ENCODE measurements at regions of chr9 and their contacts with region 1.

Region 1: DNA sequence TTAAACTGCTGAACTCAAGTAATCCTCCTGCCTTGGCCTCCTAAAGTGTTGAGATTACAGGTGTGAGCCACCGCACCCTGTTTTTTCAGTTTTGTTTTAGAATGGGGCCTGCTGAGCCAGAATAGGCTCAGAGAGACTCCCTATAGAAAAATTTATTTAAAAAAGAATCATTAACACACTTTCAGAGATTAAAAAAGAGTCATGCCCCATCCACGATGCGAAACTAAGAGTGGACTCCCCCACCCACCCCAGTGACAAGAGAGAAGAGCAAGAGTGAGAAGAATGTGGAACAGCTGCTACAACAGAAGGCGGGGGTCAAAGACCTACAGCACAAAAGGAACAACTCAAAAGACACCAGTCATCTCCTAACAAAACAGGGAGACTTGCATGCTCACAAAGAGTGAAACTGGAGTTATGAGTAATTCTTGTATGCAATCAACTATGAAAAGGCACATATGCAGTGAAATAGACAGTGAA is 47.2 kb downstream of the GLDC start:
- DNase-seq: peak; percentile 92
- ATAC-seq: peak; percentile 99
- H3K4me3 ChIP-seq: no peak overlapping the region
- H3K27ac ChIP-seq: peak overlapping the region; percentile 63
- H3K4me1 ChIP-seq: peaks cover 10% of the 10 kb centered on the region; the same call in 1 of the 2 replicates
- H3K27me3 ChIP-seq: no peaks in the 10 kb centered on the region
- CTCF ChIP-seq: no peak
- EP300 ChIP-seq: peak; percentile 69 to 92; a peak in 3 of 4 replicates
- POLR2A ChIP-seq: no peak
- RAD21 ChIP-seq: peak; percentile 14; the same call in 1 of the 2 replicates

Region 2: GRCh38 chr9:6552033-6552432 is 46.3 kb before region 1 on chr9:
- CTCF ChIA-PET with region 1: no interaction called
- POLR2A ChIA-PET with region 1: no interaction called
- RAD21 ChIA-PET with region 1: no interaction called
- SMC1A ChIA-PET with region 1: no interaction called
- in situ Hi-C with region 1: no loop called
- intact Hi-C with region 1: no loop called
- DNase-seq: no peak
- ATAC-seq: no peak
- H3K4me3 ChIP-seq: no peak overlapping the region
- H3K27ac ChIP-seq: no peak overlapping the region
- H3K4me1 ChIP-seq: no peaks in the 10 kb centered on the region
- H3K27me3 ChIP-seq: no peaks in the 10 kb centered on the region
- CTCF ChIP-seq: no peak
- EP300 ChIP-seq: no peak
- POLR2A ChIP-seq: no peak
- RAD21 ChIP-seq: no peak

Region 3: GRCh38 chr9:6584881-6585597 is 13.2 kb before region 1 on chr9:
- CTCF ChIA-PET with region 1: interaction called, 36 read pairs
- POLR2A ChIA-PET with region 1: no interaction called
- RAD21 ChIA-PET with region 1: interaction called, 11 read pairs
- SMC1A ChIA-PET with region 1: interaction called, 8 read pairs
- in situ Hi-C with region 1: no loop called
- intact Hi-C with region 1: no loop called
- DNase-seq: no peak
- ATAC-seq: peak; percentile 85
- H3K4me3 ChIP-seq: no peak overlapping the region
- H3K27ac ChIP-seq: no peak overlapping the region
- H3K4me1 ChIP-seq: no peaks in the 10 kb centered on the region
- H3K27me3 ChIP-seq: no peaks in the 10 kb centered on the region
- CTCF ChIP-seq: peak in 2 of 3 experiments; percentile 13 to 35; a peak in 3 of 6 replicates
- EP300 ChIP-seq: no peak
- POLR2A ChIP-seq: no peak
- RAD21 ChIP-seq: peak; percentile 42; the same call in 1 of the 2 replicates

Region 4: DNA sequence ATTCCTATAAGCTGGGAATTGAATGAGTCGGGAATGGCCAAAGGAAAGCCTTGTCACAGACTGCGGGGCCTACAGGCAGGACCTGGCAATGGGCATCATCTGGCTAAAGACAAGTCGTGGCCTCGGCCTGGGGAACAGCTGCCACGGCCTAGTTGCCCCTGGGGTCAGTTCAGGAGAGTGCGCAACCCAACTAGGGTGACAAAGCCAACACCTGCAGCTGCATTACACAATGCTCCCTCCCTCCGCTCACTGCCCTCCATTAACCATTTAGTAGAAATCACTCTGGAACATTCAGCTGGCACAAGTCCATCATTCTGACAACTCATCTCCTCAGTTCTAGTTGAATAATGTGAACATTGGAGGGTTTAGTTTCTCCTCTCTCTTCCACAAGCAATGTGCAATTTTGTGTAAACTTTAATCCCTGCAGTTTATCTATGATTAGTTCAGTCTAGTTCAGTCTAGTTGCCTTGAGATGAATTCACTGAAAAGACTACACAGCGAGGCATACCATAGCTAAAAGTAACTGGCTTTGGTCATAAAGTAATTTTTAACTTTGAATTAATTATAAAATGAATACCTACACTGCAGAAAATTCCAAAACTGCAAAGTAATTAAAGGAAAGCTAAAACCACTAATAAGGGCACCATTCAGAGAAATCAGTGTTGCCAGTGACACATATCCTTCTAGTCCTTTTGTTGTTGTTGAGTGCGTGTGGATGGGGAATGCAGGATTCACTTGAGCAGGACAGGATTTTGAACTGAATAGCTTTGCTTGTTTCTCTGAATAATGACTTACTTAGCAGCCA is 42.2 kb after region 1 on chr9:
- CTCF ChIA-PET with region 1: interaction called, 3 read pairs
- POLR2A ChIA-PET with region 1: interaction called, 3 read pairs
- RAD21 ChIA-PET with region 1: interaction called, 6 read pairs
- SMC1A ChIA-PET with region 1: interaction called, 31 read pairs
- in situ Hi-C with region 1: no loop called
- intact Hi-C with region 1: loop called (anchors 2 kb)
- DNase-seq: no peak
- ATAC-seq: no peak
- H3K4me3 ChIP-seq: no peak overlapping the region
- H3K27ac ChIP-seq: no peak overlapping the region
- H3K4me1 ChIP-seq: peaks cover 7% of the 10 kb centered on the region; the same call in 1 of the 2 replicates
- H3K27me3 ChIP-seq: no peaks in the 10 kb centered on the region
- CTCF ChIP-seq: no peak
- EP300 ChIP-seq: no peak
- POLR2A ChIP-seq: no peak
- RAD21 ChIP-seq: no peak

Region 5: DNA sequence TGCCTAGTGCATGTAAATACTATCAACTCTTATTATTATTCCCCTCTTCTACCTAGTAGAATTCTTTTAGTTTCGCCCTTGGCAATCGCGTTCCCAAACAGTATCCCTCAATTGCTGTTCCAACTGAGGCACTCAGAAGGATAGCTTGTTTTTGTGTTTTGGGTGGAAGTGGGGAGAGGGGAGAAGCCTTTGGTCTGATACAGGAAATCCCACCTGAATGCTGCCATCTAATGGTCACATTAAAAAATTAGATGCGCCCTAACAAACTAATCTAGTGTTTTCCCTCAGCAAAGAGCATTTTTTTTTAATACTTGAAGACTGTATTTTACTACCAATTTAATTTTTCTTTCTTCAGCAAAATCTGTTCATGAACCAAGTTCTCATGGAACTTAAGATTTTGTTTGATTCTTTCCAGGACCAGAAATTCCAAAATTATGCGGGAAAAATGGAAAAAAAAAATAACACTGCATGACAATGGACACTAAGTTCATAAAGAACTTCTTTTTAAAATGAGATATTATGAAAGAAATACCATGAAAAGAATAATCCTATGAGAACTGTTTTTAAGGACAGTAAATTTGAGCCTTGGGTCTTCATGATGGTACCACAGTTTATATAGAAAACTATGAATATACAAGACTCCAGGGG is 69.5 kb after region 1 on chr9:
- CTCF ChIA-PET with region 1: interaction called, 13 read pairs
- POLR2A ChIA-PET with region 1: interaction called, 10 read pairs
- RAD21 ChIA-PET with region 1: interaction called, 16 read pairs
- SMC1A ChIA-PET with region 1: interaction called, 25 read pairs
- in situ Hi-C with region 1: no loop called
- intact Hi-C with region 1: no loop called
- DNase-seq: no peak
- ATAC-seq: peak; percentile 77
- H3K4me3 ChIP-seq: no peak overlapping the region
- H3K27ac ChIP-seq: no peak overlapping the region
- H3K4me1 ChIP-seq: no peaks in the 10 kb centered on the region; the same call in 1 of the 2 replicates
- H3K27me3 ChIP-seq: no peaks in the 10 kb centered on the region
- CTCF ChIP-seq: peak; percentile 30 to 64 (median 64); a peak in 5 of 6 replicates
- EP300 ChIP-seq: no peak
- POLR2A ChIP-seq: no peak
- RAD21 ChIP-seq: peak; percentile 75

Region 6: DNA sequence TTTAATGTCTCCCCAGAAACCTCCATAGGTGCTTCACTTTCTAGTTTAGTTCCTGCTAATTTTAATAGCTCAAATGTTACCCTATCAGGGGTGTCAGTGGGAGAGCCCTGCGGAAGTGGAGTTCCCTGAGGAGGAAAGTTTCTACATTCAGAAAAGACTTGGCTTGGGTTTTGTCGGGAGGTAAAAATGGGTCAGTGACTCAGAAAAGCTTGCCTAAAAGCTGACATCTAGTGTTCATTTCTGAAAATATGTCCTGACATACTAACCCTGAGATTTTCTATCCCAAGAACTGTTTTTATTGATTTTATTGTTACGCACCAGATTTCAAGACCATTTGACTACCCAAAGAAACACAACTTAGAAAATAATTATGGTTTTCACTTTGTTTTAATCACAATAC is 88.1 kb after region 1 on chr9:
- CTCF ChIA-PET with region 1: interaction called, 3 read pairs
- POLR2A ChIA-PET with region 1: interaction called, 5 read pairs
- RAD21 ChIA-PET with region 1: interaction called, 8 read pairs
- SMC1A ChIA-PET with region 1: interaction called, 13 read pairs
- in situ Hi-C with region 1: no loop called
- intact Hi-C with region 1: loop called (anchors 5 kb)
- DNase-seq: no peak
- ATAC-seq: no peak
- H3K4me3 ChIP-seq: no peak overlapping the region
- H3K27ac ChIP-seq: peak overlapping the region; percentile 65
- H3K4me1 ChIP-seq: peaks cover 40% of the 10 kb centered on the region
- H3K27me3 ChIP-seq: no peaks in the 10 kb centered on the region
- CTCF ChIP-seq: peak; percentile 24 to 57 (median 43); a peak in 3 of 6 replicates
- EP300 ChIP-seq: no peak
- POLR2A ChIP-seq: no peak
- RAD21 ChIP-seq: peak; percentile 64